ENCODE measurements at regions of chr12 and their contacts with region 1.

Region 1: DNA sequence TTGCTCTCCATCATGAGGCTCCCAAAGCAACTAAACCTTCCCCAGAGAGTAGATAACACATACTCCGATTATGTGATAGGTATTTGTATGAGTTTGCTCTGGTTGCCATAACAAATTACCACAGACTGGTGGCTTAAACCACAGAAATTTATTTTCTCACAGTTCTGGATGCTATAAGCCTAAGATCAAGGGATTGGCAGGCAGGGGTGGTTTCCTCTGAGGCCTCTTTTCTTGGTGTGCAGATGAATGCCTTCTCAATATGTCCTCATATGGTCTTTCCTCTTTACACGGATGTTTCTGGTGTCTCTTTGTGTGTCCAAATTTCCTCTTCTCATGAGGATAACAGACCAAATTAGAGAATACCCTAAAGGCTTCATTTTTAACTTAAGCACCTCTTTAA is 285.8 kb upstream of the GRIP1 start:
- DNase-seq: peak; percentile 67
- ATAC-seq: peak; percentile 93
- H3K4me3 Mint-ChIP-seq: no peak overlapping the region
- H3K27ac Mint-ChIP-seq: no peak overlapping the region
- H3K4me1 Mint-ChIP-seq: peaks cover 36% of the 10 kb centered on the region
- H3K27me3 Mint-ChIP-seq: no peaks in the 10 kb centered on the region

Region 2: GRCh38 chr12:66879409-66879808 is 85.2 kb before region 1 on chr12:
- CTCF ChIA-PET with region 1: no interaction called
- POLR2A ChIA-PET with region 1: no interaction called
- intact Hi-C with region 1: no loop called
- DNase-seq: no peak
- ATAC-seq: no peak
- H3K4me3 Mint-ChIP-seq: no peak overlapping the region
- H3K27ac Mint-ChIP-seq: no peak overlapping the region
- H3K4me1 Mint-ChIP-seq: no peaks in the 10 kb centered on the region
- H3K27me3 Mint-ChIP-seq: peaks cover 3% of the 10 kb centered on the region

Region 3: DNA sequence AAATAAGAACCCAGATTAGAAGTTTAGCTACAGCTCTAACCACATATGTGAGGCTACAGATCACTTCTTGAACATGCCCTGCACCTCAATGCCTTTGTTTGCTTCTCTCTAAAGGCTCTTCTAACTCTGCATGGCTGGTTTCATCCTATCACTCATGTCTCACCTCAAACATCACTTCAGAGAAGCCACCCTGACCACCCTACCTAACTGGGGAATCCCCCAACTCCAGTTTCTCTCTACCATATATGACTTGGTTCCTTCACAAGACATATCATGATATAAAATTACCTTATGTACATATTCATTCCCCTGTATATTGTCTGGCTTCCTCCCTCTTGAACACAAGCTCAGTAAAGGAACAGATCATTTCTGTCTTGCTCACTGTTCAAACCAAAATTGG is 35.5 kb before region 1 on chr12:
- CTCF ChIA-PET with region 1: no interaction called
- POLR2A ChIA-PET with region 1: no interaction called
- intact Hi-C with region 1: loop called in 1 of 2 experiments (anchors 1 kb)
- DNase-seq: peak; percentile 66
- ATAC-seq: peak; percentile 95
- H3K4me3 Mint-ChIP-seq: no peak overlapping the region
- H3K27ac Mint-ChIP-seq: no peak overlapping the region
- H3K4me1 Mint-ChIP-seq: peaks cover 18% of the 10 kb centered on the region
- H3K27me3 Mint-ChIP-seq: peaks cover 3% of the 10 kb centered on the region

Region 4: GRCh38 chr12:66942741-66943465 is 21.7 kb before region 1 on chr12:
- CTCF ChIA-PET with region 1: no interaction called
- POLR2A ChIA-PET with region 1: no interaction called
- intact Hi-C with region 1: loop called (anchors 1 to 2 kb)
- DNase-seq: no peak
- ATAC-seq: no peak
- H3K4me3 Mint-ChIP-seq: no peak overlapping the region
- H3K27ac Mint-ChIP-seq: no peak overlapping the region
- H3K4me1 Mint-ChIP-seq: peaks cover 35% of the 10 kb centered on the region
- H3K27me3 Mint-ChIP-seq: peaks cover 2% of the 10 kb centered on the region

Region 5: DNA sequence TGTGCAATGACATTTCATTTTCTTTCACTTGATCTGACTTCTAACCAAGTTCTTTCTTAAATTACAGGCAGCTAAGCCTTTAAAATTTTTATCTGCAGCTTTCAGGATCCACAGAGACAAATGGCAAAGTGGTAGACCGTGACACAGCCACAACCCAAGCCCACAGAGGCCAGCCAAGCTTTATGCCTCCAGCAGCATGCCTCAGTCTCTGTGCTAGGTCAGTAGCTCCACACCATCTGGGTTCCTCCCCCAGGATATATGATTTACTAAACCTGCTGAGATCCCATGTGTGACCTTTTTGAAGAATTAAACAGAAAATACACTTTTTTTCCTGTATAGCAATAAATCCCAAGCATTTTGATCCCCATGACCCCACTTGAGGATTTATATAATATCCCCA is 14.2 kb after region 1 on chr12:
- CTCF ChIA-PET with region 1: no interaction called
- POLR2A ChIA-PET with region 1: no interaction called
- intact Hi-C with region 1: loop called in 1 of 2 experiments (anchors 1 kb)
- DNase-seq: no peak
- ATAC-seq: peak; percentile 35
- H3K4me3 Mint-ChIP-seq: no peak overlapping the region
- H3K27ac Mint-ChIP-seq: no peak overlapping the region
- H3K4me1 Mint-ChIP-seq: peaks cover 10% of the 10 kb centered on the region
- H3K27me3 Mint-ChIP-seq: no peaks in the 10 kb centered on the region